MCF 10A (cell line): ENCODE measurements at regions of chr1 and their contacts with region 1.

Region 1: DNA sequence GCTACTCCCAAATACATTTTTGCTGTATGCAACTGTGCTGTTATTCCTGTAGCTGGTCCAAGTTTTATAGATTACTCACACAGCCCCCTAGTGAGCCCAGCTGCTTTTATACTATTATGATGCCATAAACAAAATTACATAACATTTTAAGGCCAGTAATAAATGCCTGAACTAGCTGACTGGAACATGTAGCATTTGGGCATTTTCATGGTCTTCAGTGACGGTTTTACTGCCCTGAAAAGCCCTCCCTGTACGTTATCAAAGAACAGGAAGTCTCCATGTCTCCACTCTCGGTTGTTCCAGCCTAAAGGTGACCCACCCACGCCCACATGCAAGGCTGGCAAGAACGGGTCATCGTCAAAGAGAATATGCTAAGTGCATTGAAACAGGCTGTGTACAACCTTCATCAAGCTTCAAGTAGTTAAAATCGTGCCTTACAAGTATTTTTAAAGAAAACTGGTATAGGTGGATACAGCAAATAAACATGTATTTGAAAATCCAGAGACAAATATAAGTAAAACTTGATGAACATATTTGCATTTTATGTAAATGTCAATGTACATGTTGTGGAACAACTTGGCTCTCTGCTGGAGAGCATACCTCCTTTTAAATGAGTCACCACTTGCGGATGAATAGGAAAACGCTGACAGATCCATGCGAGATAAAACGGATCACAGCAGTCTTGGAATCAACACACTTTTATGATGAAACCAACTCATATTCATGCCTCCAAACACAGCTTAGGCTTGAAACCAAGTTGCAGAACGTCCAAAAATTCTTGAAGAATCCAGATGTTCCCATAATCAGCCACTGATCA is 520.5 kb downstream of the SMYD3 start:
- DNase-seq: peak; percentile 93
- H3K4me3 Mint-ChIP-seq: peak overlapping the region; percentile 12
- H3K27ac Mint-ChIP-seq: peak overlapping the region; percentile 4
- H3K4me1 Mint-ChIP-seq: peaks cover 21% of the 10 kb centered on the region
- H3K27me3 Mint-ChIP-seq: no peaks in the 10 kb centered on the region
- CTCF ChIP-seq: no peak

Region 2: GRCh38 chr1:245807954-245808719 is 178.5 kb before region 1 on chr1:
- CTCF ChIA-PET with region 1: no interaction called
- POLR2A ChIA-PET with region 1: no interaction called
- intact Hi-C with region 1: no loop called
- DNase-seq: no peak
- H3K4me3 Mint-ChIP-seq: no peak overlapping the region
- H3K27ac Mint-ChIP-seq: no peak overlapping the region
- H3K4me1 Mint-ChIP-seq: no peaks in the 10 kb centered on the region
- H3K27me3 Mint-ChIP-seq: no peaks in the 10 kb centered on the region
- CTCF ChIP-seq: no peak

Region 3: DNA sequence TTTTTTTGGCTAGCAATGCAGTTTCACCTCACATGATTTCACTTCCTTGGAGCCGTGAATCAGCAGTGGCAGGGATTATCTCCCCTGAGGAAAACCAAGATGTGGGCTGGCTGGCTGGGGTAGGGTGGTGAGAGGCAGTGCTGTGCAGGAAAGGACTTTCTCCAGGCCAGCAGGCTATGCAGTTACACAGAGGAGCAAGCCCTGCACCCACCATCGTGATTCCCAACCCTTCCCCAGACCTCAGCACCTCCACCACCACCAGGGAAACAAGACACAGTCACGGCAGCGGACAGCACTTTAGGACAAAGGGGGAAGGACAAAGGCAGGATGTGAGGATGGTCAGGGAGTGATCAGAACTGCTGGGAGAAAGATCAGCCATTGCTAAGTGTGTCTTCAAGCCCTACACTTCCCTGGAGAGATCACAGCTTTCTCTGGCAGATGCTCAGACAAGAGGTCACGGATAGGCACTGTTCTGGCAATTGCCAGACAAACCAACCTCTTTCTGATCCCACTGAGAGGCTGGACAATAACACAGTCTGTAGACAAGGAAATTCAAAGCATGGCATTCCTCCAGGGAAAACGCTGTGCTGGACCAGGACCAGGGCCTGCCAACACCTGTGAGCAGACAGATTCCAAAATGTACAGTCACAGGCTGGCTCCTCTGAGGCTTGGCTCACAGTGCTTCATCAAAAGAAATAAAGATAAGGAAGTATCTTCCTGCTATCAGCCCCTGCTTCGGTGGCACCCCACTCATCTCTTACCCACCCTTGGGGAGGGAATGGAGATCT is 11.1 kb after region 1 on chr1:
- CTCF ChIA-PET with region 1: interaction called, 4 read pairs
- POLR2A ChIA-PET with region 1: interaction called, 10 read pairs
- intact Hi-C with region 1: no loop called
- DNase-seq: peak; percentile 90
- H3K4me3 Mint-ChIP-seq: no peak overlapping the region
- H3K27ac Mint-ChIP-seq: peak overlapping the region; percentile 73
- H3K4me1 Mint-ChIP-seq: peaks cover 40% of the 10 kb centered on the region
- H3K27me3 Mint-ChIP-seq: no peaks in the 10 kb centered on the region
- CTCF ChIP-seq: no peak